Activated T-helper 1 cell treated with anti-CD3 and anti-CD28 coated beads, Interleukin-12 subunit alpha, Interleukin-12 subunit beta, Interleukin-2, Interleukin-4 antibody, amounts not matched to agents 30 ng/mL and 10 ng/mL and 1 ng/mL, durations not matched to agents 14 hours and 24 hours and 36 hours (primary cell): ENCODE measurements at regions of chr3 and their contacts with region 1.

Region 1: DNA sequence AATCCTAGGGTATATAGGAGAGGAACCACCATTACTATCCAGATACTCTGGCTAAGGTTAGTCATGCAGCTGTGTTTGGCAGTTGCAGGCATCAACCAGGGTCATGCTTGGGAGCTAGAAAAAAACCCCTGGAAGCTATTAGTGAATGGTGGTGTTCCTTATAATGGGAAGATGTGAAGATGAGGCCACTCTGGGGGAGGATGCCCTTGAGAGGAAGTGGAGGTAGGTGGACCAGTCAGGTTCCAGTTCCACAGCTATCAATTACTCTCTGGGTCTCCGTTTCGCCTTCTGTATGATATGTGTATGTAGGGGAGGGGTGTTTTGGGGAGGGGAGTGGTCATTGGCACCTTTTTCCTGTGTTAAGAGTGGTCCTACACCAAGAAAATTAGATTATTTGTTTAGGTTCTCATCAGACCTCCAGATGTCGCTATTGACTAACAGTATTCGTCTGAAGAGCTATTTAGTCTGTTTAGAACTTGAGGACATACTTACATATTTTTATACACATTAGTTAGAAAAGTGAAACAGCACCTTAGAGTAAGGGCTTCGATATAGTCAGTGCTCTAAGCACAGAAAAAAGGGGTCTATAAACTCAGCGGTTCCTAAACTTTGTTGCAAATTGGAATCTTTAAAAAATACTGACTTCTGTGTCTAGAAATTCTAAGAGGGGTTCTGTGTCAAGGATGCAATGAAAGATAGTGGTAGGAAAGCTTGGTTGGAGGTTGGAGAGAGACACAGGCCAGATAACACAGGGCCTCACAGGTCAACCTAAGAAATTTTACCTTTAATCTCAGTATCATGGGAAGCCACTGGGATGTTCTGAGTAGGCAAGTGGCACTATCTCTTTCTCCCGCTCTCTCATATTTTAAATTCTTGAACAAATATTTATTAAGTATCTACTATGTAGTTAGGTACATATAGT is 9.1 kb upstream of the HPS3 start:
- DNase-seq: no peak
- H3K4me3 Mint-ChIP-seq: no peak overlapping the region
- H3K27ac Mint-ChIP-seq: no peak overlapping the region
- H3K4me1 Mint-ChIP-seq: peaks cover 5% of the 10 kb centered on the region
- H3K27me3 Mint-ChIP-seq: peaks cover 9% of the 10 kb centered on the region

Region 2: GRCh38 chr3:148955544-148956346 is 164.6 kb before region 1 on chr3:
- intact Hi-C with region 1: loop called (anchors 1 kb)
- DNase-seq: no peak
- H3K4me3 Mint-ChIP-seq: no peak overlapping the region
- H3K27ac Mint-ChIP-seq: no peak overlapping the region
- H3K4me1 Mint-ChIP-seq: peaks cover 10% of the 10 kb centered on the region
- H3K27me3 Mint-ChIP-seq: peaks cover 18% of the 10 kb centered on the region